ENCODE measurements at regions of chr6 and their contacts with region 1.

Region 1: GRCh38 chr6:122530440-122531046 is 58.9 kb upstream of the SERINC1 start:
- DNase-seq: peak in 1 of 2 donors; percentile 25
- ATAC-seq: peak; percentile 91
- H3K4me3 ChIP-seq: no peak overlapping the region
- H3K27ac ChIP-seq: no peak overlapping the region
- H3K4me1 ChIP-seq: no peaks in the 10 kb centered on the region
- H3K27me3 ChIP-seq: no peaks in the 10 kb centered on the region
- CTCF ChIP-seq: peak; percentile 78 to 91 (median 86)
- POLR2A ChIP-seq: no peak

Region 2: GRCh38 chr6:122381497-122382265 is 148.9 kb before region 1 on chr6:
- in situ Hi-C with region 1: loop called (anchors 5 kb)
- intact Hi-C with region 1: loop called (anchors 1 kb)
- DNase-seq: peak; percentile 16 to 45
- ATAC-seq: peak; percentile 75 to 89
- H3K4me3 ChIP-seq: no peak overlapping the region
- H3K27ac ChIP-seq: no peak overlapping the region
- H3K4me1 ChIP-seq: no peaks in the 10 kb centered on the region
- H3K27me3 ChIP-seq: no peaks in the 10 kb centered on the region
- CTCF ChIP-seq: peak; percentile 70 to 83 (median 73)
- POLR2A ChIP-seq: no peak

Region 3: DNA sequence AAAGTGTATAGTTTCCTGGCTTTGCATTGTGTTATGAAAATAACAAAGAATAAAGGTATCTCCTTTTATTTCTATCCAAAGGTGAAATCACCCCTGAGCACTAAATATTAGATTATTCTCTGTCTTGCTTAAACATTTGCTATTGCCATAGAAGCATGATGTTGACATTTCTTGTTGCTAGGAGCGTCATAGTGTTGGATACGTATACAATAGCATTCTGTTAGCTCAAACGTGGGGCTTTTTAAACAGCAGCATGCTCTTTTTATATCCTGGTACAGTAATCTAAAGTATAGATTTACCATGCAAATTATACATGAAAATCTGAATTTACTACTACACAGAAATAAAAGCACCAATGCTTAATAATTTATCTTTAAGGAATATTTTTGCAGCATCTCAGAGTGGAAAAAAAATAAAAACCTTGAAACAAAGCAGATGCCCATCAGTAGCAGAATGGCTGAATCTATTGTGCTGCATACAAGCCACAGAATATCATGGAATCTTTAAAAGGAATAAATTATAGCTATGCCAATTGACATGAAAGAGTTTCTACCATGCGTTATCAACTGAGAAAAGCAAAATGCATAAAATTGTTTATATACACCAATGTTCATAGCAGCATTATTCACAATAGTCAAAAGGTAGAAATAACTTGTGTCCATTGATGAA is 140.7 kb before region 1 on chr6:
- in situ Hi-C with region 1: loop called in 2 of 4 experiments (anchors 5 kb)
- intact Hi-C with region 1: no loop called
- DNase-seq: no peak
- ATAC-seq: no peak
- H3K4me3 ChIP-seq: no peak overlapping the region
- H3K27ac ChIP-seq: no peak overlapping the region
- H3K4me1 ChIP-seq: no peaks in the 10 kb centered on the region
- H3K27me3 ChIP-seq: no peaks in the 10 kb centered on the region
- CTCF ChIP-seq: no peak
- POLR2A ChIP-seq: no peak

Region 4: DNA sequence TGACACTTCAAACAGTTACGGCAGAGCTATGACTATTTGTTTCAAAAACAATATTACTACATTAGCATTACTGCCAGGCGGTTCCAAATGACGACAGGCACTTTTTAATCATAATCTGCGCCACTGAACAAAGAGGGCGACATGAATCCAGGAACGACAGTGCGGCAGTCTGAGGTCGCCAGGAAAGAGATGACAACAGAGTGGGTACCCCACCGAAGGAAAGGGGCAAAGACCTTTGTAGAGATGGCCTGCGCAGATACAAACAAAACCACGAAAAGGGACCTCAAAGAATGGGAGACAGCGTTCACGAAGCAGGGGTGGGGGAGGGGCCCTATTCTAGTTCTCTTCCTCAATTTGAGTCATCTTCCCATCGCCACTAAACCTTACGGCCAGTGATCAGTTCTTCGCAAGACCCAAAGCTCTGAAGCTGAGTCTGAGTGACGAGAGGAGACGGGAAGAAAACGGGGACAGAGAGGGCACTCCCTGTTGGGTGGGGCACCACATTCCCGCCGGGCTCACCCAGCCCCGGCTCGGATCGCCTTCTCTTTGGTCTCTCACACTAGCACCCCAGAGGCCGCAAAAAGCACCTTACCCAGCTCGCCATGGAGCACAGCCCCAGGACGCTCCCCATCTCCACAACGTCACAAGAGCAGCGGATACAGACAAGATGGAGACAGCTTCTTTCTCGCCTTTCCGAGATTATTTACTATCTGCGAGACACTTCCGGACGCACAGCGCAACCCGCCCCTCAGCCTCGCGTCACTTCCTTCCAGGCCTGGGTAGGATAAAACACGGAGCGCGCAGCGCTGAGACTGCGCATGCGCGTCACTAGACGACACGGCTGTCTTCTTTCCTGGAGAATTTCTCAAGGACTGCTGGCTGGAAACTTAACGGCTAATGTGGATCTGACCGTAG is 59.2 kb before region 1 on chr6 and contains the start of gene SERINC1:
- in situ Hi-C with region 1: no loop called
- intact Hi-C with region 1: loop called (anchors 1 kb)
- DNase-seq: peak; percentile 93 to 95
- ATAC-seq: peak; percentile 97
- H3K4me3 ChIP-seq: peak within 1 kb of the TSS; percentile 79 to 99 (median 90)
- H3K27ac ChIP-seq: peak within 1 kb of the TSS; percentile 94 to 99 (median 97)
- H3K4me1 ChIP-seq: peaks cover 33 to 47% of the 10 kb centered on the region in 2 donors
- H3K27me3 ChIP-seq: no peaks in the 10 kb centered on the region
- CTCF ChIP-seq: peak in 1 of 5 experiments; percentile 7
- POLR2A ChIP-seq: peak; percentile 86 to 91
- total RNA-seq, gene SERINC1: 161 to 273 (median 198) TPM

Region 5: DNA sequence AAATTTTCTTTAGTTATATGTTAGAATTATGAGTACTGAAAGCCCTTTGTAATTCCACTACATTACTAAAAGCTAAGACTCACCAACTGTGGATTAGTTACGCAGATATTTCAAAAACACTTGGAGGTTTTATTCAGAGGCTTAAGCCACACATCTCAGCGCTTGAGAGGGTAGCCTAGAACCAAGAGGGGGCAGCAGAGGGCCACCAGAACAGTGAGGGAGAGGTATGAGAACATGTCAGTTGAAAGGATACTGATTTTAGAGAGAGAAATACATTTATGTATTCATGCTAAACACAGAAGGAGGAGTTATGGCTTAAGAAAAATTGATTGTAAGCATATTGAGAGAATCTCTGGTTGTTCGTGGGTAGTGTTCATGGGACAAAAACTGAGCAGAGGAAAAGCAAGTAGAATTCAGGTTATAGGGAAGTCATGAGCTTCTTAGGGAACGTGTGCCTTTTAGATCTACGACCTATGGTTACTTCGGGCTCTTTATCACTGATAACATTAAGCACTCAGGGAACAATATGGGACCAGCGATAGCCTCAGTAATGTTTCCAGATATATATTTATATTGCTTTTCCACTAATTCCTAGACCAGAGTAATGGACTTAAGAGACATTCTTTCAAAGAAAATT is 38.5 kb before region 1 on chr6:
- in situ Hi-C with region 1: loop called in 1 of 4 experiments (anchors 5 kb)
- intact Hi-C with region 1: loop called (anchors 1 kb)
- DNase-seq: peak; percentile 27 to 59
- ATAC-seq: peak; percentile 89 to 99
- H3K4me3 ChIP-seq: no peak overlapping the region
- H3K27ac ChIP-seq: no peak overlapping the region
- H3K4me1 ChIP-seq: no peaks in the 10 kb centered on the region
- H3K27me3 ChIP-seq: no peaks in the 10 kb centered on the region
- CTCF ChIP-seq: peak; percentile 50 to 89 (median 64)
- POLR2A ChIP-seq: no peak

Measured in gastrocnemius medialis (tissue), 4 donors.